Left colon (tissue), 2 donors: ENCODE measurements at regions of chr5 and their contacts with region 1.

Region 1: DNA sequence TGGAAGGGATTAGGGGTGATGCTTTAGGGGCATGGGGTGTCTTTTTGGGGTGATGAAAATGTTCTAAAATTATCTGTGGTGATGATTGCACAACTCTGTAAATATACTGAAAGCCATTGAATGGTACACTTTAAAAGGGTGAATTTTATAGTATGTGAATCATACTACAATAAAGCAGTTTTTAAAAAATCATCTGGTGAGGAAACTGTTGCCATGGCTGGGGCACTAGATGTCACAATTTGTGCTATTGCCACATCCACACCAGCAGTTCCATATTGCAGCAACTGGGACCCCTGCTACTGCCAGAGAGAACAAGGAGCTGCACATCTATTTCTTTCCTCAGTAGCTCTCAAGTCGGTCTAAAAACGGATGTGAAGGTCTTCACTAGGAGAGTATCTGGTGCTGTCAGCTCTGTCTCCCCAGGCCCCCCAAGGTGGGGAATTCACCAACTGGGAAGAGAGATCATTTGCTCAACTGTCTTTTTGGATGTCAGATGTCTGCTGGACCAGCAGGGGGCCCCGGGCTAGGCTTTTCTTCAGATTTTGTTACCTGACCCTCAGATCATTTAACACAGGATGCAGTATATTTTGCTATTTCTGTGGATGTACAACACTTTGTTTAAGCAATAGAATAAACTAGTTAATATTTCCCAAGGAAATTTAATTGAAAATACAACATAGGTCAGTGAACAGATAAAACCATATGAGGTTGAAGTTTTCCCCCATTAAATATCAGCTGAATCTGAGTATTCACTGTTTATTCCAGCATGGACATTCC is 13.2 kb downstream of the CMYA5 start:
- DNase-seq: no peak
- ATAC-seq: no peak

Region 2: GRCh38 chr5:79857714-79858409 is 155.1 kb after region 1 on chr5:
- intact Hi-C with region 1: loop called in 1 of 2 experiments (anchors 10 kb)
- DNase-seq: peak in 1 of 2 donors; percentile 79
- ATAC-seq: peak; percentile 51